Gastrocnemius medialis (tissue), 4 donors: ENCODE measurements at regions of chr12 and their contacts with region 1.

Region 1: DNA sequence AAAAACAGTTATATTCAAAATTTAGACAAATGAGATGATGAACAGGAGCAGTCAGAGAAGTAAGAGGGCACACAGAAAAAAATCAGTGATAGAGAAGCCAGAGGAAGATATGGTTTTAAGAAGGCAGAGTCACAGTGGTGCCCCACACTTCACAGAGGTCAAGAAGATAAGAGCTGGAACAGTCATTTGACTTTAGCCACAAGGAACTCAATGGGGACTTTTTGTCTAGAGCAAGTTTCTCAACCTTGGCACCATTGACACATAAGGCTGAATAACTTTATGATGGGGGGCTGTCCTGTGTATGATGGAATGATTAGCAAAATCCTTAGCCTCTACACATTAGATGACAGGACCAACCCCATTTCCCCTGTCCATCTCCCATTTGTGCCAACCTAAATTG is 172.8 kb upstream of the PLEKHG7 start:
- DNase-seq: no peak
- ATAC-seq: no peak
- H3K4me3 ChIP-seq: no peak overlapping the region
- H3K27ac ChIP-seq: no peak overlapping the region
- H3K4me1 ChIP-seq: peaks cover 0 to 6% of the 10 kb centered on the region in 2 donors
- H3K27me3 ChIP-seq: no peaks in the 10 kb centered on the region
- CTCF ChIP-seq: no peak
- POLR2A ChIP-seq: no peak

Region 2: GRCh38 chr12:92485351-92486348 is 44.3 kb before region 1 on chr12:
- in situ Hi-C with region 1: no loop called
- intact Hi-C with region 1: loop called (anchors 5 kb)
- DNase-seq: no peak
- ATAC-seq: peak; percentile 37 to 56
- H3K4me3 ChIP-seq: no peak overlapping the region
- H3K27ac ChIP-seq: peak overlapping the region in 3 of 4 donors; percentile 47 to 62 (median 55)
- H3K4me1 ChIP-seq: peaks cover 0 to 7% of the 10 kb centered on the region in 2 donors
- H3K27me3 ChIP-seq: no peaks in the 10 kb centered on the region
- CTCF ChIP-seq: no peak
- POLR2A ChIP-seq: no peak